ENCODE measurements at regions of chr11 and their contacts with region 1.

Region 1: DNA sequence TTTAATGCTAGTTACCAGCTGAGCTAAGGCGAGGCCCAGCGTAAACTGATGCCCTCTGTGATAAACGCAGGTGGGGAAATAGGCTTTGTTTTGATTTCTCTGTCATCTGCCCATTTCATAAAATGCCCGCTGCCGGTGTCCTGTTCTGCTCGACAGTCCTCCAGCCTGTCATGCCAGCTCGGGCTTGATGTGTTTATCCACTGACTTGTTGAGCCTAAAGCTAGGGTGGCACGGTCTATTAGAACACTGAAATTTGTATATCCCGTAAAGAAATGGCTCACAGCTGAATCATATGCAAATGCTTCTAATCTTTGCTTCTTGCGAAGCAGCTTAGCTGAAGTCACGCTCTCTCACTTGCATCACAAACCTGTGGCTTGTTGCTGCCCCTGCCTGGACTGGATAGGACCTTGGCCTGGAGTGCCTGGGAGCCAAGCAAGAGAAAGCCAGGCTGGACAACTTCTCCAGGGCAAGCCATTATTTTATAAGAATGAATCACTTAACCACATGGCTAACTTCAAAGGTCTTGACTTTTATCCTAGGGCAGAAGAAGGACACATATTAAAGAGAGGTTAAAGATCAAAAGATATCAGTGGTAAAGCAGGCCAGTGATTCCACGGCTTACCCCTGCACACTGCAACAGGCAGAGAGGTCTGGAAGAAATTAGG is 33.1 kb downstream of the EHF start:
- DNase-seq: peak; percentile 59
- H3K4me3 Mint-ChIP-seq: no peak overlapping the region
- H3K27ac Mint-ChIP-seq: no peak overlapping the region
- H3K4me1 Mint-ChIP-seq: peaks cover 43% of the 10 kb centered on the region
- H3K27me3 Mint-ChIP-seq: peaks cover 31% of the 10 kb centered on the region

Region 2: DNA sequence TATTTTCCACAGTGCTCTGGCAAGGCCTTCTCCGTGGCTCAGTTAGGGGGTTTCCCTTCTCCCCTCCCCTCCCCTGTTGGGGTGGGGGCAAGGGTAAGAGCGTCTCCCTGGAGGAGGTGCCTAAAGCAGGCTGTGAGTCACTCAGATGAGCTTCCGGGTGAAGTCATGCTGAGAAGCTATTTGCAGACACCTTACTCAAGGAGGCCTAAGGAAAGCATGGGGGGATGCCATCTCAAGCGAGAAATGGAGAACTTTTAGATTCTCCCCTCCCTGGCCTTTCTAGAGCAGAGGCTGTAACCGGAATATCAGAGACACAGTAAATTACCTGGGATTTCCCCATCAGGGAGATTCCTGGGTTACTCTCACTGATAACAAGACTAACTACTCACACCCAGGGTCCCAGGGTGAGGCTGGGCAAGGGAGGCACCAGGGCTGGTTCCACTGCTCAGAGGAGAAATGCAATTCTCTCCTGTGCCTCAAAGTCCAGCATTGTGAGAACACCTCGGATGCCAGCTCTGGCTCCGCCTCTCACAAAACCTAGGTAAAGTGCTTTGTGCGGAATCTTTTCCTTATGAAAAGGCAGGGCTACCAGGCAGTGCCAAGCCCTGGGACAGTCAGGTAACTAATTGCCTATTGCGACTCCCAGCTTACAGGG is 419.7 kb before region 1 on chr11:
- CTCF ChIA-PET with region 1: no interaction called
- intact Hi-C with region 1: loop called (anchors 1 kb)
- DNase-seq: peak; percentile 93
- H3K4me3 Mint-ChIP-seq: no peak overlapping the region
- H3K27ac Mint-ChIP-seq: peak overlapping the region; percentile 83
- H3K4me1 Mint-ChIP-seq: peaks cover 57% of the 10 kb centered on the region
- H3K27me3 Mint-ChIP-seq: no peaks in the 10 kb centered on the region

Region 3: DNA sequence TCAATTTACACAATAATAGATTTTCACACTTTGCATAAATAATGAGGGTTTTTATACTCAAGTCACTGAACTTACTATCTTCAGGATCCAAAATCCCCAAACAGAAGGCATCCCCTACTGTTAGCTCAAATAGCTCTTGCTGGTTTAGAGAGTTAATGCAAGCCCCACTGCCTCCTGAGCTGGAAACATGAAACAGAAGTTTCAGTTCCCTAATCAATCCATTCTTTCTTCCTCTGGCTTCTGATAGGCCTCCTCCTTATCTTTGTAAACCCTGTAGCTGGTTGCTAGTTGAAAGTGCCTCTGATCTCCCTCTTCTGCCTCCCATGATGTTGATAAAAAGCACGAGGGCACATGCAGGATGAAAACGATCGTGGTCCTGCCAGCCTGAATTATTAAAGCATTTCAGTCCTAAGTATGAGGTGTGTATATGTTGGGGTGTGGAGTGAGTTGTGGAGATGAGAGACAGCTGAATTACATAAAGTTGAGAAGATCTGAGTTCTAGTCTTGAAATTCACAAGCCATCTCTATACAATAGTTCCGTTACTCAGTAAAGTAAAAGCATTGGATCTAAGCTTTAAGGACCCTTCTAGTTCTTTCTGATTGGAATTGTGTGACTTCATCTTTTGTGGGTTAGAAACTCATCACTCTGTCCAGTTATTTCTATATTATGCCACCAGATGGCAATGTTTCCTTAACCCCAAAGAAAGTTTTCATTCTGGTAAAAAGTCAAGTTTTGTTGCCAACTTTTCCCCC is 68.0 kb before region 1 on chr11:
- CTCF ChIA-PET with region 1: interaction called, 4 read pairs
- intact Hi-C with region 1: loop called (anchors 1 kb)
- DNase-seq: no peak
- H3K4me3 Mint-ChIP-seq: no peak overlapping the region
- H3K27ac Mint-ChIP-seq: no peak overlapping the region
- H3K4me1 Mint-ChIP-seq: peaks cover 4% of the 10 kb centered on the region
- H3K27me3 Mint-ChIP-seq: peaks cover 16% of the 10 kb centered on the region

Region 4: DNA sequence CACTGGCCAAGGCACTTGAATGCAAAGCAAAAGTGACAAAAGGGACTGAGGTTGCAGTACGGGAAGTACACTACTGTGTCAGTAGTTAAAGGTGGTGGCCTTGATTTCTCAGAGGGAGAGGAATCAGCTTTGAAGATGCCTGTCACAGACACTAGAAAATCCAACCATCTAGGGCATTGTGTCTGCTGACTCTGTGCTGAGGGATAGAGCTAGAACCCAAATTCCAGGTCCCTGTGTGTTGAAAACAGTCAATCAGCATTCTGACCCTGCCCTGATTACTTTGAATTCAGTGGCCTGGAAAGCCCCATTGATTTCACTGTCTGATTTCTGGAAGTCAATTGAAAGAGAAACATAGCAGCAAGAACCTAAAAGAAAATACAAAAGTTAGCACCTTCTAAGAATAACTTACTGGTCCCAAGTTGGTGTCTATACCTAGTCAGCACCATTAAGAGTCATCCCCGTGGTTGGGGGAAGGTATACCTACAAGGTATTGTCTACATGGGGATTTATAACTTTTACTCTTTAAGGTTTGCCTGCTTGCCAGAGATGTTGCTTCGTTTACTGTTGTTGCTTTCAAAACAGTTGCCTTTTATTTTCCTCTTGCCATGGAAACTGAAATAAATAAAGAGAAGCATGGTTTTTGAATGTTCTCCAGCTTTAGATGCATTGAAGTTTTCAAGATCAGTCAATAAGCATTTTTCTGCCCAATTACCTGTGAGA is 359.7 kb after region 1 on chr11:
- CTCF ChIA-PET with region 1: no interaction called
- intact Hi-C with region 1: loop called (anchors 1 kb)
- DNase-seq: peak; percentile 71
- H3K4me3 Mint-ChIP-seq: peak overlapping the region; percentile 39
- H3K27ac Mint-ChIP-seq: peak overlapping the region; percentile 93
- H3K4me1 Mint-ChIP-seq: peaks cover 41% of the 10 kb centered on the region
- H3K27me3 Mint-ChIP-seq: peaks cover 4% of the 10 kb centered on the region

Region 5: DNA sequence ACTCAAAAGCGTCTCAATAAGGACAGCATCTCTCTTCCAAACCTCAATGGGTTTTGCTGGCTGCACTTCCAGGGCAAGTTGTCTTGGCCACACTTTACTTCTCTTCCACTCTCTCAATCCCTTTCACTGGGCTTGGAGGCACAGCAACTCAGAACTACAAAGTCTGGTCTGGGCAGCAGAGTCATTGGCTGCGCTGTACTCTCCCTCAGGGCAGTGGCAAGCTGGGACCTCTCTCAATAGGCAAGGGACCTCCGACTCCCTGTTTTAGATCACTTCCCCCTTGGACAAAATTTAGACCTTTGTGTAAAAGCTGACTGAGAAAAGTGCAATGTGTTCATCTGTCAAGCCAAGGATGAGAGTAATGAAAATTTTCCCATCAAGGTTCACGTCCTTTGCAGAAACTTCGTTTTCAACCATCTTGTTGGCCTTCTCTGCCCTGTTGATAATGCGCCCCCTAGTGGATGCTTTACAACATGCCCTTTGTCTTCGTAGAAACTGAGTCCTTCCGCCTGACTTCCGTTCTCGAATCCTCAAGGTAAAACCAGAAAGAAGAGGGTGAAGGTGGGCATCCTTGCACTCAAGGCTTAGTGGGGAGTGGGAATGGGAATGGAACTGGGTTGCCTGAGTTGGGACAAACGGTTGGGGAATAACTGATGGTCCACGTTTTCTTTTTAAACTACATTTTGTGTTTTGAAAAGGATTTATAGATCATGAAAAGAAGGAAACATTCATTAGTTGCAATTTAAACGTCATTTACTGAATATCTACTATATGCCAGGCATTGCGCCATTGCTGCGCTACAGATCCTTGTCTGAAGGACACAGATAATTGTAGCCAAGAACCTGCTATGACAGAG is 584.1 kb after region 1 on chr11:
- CTCF ChIA-PET with region 1: no interaction called
- intact Hi-C with region 1: loop called (anchors 5 kb)
- DNase-seq: peak; percentile 79
- H3K4me3 Mint-ChIP-seq: no peak overlapping the region
- H3K27ac Mint-ChIP-seq: peak overlapping the region; percentile 34
- H3K4me1 Mint-ChIP-seq: peaks cover 69% of the 10 kb centered on the region
- H3K27me3 Mint-ChIP-seq: no peaks in the 10 kb centered on the region

Region 6: GRCh38 chr11:35598254-35599125 is 944.5 kb after region 1 on chr11:
- CTCF ChIA-PET with region 1: no interaction called
- intact Hi-C with region 1: loop called (anchors 2 kb)
- DNase-seq: peak; percentile 78
- H3K4me3 Mint-ChIP-seq: no peak overlapping the region
- H3K27ac Mint-ChIP-seq: peak overlapping the region; percentile 68
- H3K4me1 Mint-ChIP-seq: peaks cover 17% of the 10 kb centered on the region
- H3K27me3 Mint-ChIP-seq: peaks cover 60% of the 10 kb centered on the region

Measured in activated naive CD4-positive, alpha-beta T cell treated with anti-CD3 and anti-CD28 coated beads for 36 hours (primary cell).